ENCODE measurements at regions of chr1 and their contacts with region 1.

Region 1: GRCh38 chr1:94299627-94300552 is 62.5 kb upstream of the ARHGAP29 start:
- DNase-seq: peak; percentile 88
- H3K4me3 ChIP-seq: no peak overlapping the region
- H3K27ac ChIP-seq: peak overlapping the region; percentile 70
- H3K4me1 ChIP-seq: peaks cover 81% of the 10 kb centered on the region
- H3K27me3 ChIP-seq: no peaks in the 10 kb centered on the region
- CTCF ChIP-seq: no peak
- POLR2A ChIP-seq: no peak

Region 2: GRCh38 chr1:94247138-94248094 is 52.5 kb before region 1 on chr1:
- CTCF ChIA-PET with region 1: no interaction called
- POLR2A ChIA-PET with region 1: interaction called, 6 read pairs
- dilution Hi-C with region 1: no loop called
- intact Hi-C with region 1: loop called (anchors 1 kb)
- DNase-seq: peak; percentile 80
- H3K4me3 ChIP-seq: peak overlapping the region; percentile 58 to 98 (median 75)
- H3K27ac ChIP-seq: peak overlapping the region; percentile 90
- H3K4me1 ChIP-seq: peaks cover 23% of the 10 kb centered on the region
- H3K27me3 ChIP-seq: no peaks in the 10 kb centered on the region
- CTCF ChIP-seq: no peak
- POLR2A ChIP-seq: peak; percentile 95

Region 3: DNA sequence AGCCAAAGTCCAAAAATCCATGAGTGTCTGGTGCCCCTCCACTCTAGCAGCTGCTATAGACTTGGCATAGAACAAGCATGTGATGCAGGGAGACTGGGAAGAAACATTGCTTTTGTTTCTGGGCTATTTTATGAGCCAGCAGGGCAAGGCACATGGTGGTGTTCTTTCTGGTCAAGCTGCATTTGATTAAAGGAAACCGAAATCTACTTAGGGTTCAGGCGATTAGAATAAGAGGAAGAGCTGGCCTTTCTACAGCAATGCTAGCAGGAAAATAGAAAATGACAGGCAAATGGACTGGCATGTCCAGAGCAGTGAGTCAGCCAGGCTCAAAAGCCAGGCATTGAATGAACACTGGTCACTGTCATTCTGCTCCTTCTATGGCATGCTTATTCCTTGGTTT is 34.0 kb before region 1 on chr1:
- CTCF ChIA-PET with region 1: interaction called, 44 read pairs
- POLR2A ChIA-PET with region 1: no interaction called
- dilution Hi-C with region 1: no loop called
- intact Hi-C with region 1: loop called (anchors 2 kb)
- DNase-seq: peak; percentile 77
- H3K4me3 ChIP-seq: no peak overlapping the region
- H3K27ac ChIP-seq: peak overlapping the region; percentile 61
- H3K4me1 ChIP-seq: peaks cover 37% of the 10 kb centered on the region
- H3K27me3 ChIP-seq: no peaks in the 10 kb centered on the region
- CTCF ChIP-seq: no peak
- POLR2A ChIP-seq: no peak

Region 4: GRCh38 chr1:94284476-94284875 is 15.4 kb before region 1 on chr1:
- CTCF ChIA-PET with region 1: interaction called, 13 read pairs
- POLR2A ChIA-PET with region 1: interaction called, 6 read pairs
- dilution Hi-C with region 1: no loop called
- intact Hi-C with region 1: loop called (anchors 1 kb)
- DNase-seq: no peak
- H3K4me3 ChIP-seq: no peak overlapping the region
- H3K27ac ChIP-seq: peak overlapping the region; percentile 47
- H3K4me1 ChIP-seq: peaks cover 45% of the 10 kb centered on the region
- H3K27me3 ChIP-seq: no peaks in the 10 kb centered on the region
- CTCF ChIP-seq: no peak
- POLR2A ChIP-seq: no peak

Region 5: GRCh38 chr1:94319319-94320180 is 19.7 kb after region 1 on chr1:
- CTCF ChIA-PET with region 1: interaction called, 9 read pairs
- POLR2A ChIA-PET with region 1: interaction called, 23 read pairs
- dilution Hi-C with region 1: no loop called
- intact Hi-C with region 1: loop called (anchors 1 kb)
- DNase-seq: peak; percentile 72
- H3K4me3 ChIP-seq: no peak overlapping the region
- H3K27ac ChIP-seq: peak overlapping the region; percentile 83
- H3K4me1 ChIP-seq: peaks cover 76% of the 10 kb centered on the region
- H3K27me3 ChIP-seq: no peaks in the 10 kb centered on the region
- CTCF ChIP-seq: no peak
- POLR2A ChIP-seq: peak; percentile 51

Region 6: GRCh38 chr1:94351485-94351884 is 51.6 kb after region 1 on chr1:
- CTCF ChIA-PET with region 1: no interaction called
- POLR2A ChIA-PET with region 1: no interaction called
- dilution Hi-C with region 1: no loop called
- intact Hi-C with region 1: no loop called
- DNase-seq: no peak
- H3K4me3 ChIP-seq: no peak overlapping the region
- H3K27ac ChIP-seq: no peak overlapping the region
- H3K4me1 ChIP-seq: no peaks in the 10 kb centered on the region
- H3K27me3 ChIP-seq: peaks cover 32 to 46% of the 10 kb centered on the region in 2 experiments
- CTCF ChIP-seq: no peak
- POLR2A ChIP-seq: no peak

Measured in endothelial cell of umbilical vein (primary cell).